Heart left ventricle (tissue), 16 donors: ENCODE measurements at regions of chr1 and their contacts with region 1.

Region 1: GRCh38 chr1:208029381-208030287 is 118.7 kb upstream of the CD34 start:
- DNase-seq: peak in 1 of 5 donors; percentile 32
- ATAC-seq: peak; percentile 39 to 74 (median 60)
- H3K4me3 ChIP-seq: peak overlapping the region in 2 of 12 donors; percentile 19 to 26
- H3K27ac ChIP-seq: peak overlapping the region; percentile 56 to 94 (median 77)
- H3K4me1 ChIP-seq: peaks cover 0 to 54% (median 21%) of the 10 kb centered on the region in 12 donors
- H3K27me3 ChIP-seq: no peaks in the 10 kb centered on the region
- CTCF ChIP-seq: no peak
- POLR2A ChIP-seq: no peak

Region 2: GRCh38 chr1:207676153-207676552 is 353.5 kb before region 1 on chr1:
- intact Hi-C with region 1: no loop called
- DNase-seq: no peak
- ATAC-seq: no peak
- H3K4me3 ChIP-seq: no peak overlapping the region
- H3K27ac ChIP-seq: no peak overlapping the region
- H3K4me1 ChIP-seq: no peaks in the 10 kb centered on the region
- H3K27me3 ChIP-seq: peaks cover 0 to 29% (median 4%) of the 10 kb centered on the region in 9 donors
- CTCF ChIP-seq: no peak
- POLR2A ChIP-seq: no peak

Region 3: GRCh38 chr1:207751790-207752455 is 277.7 kb before region 1 on chr1 and contains the start of gene CD46:
- intact Hi-C with region 1: no loop called
- DNase-seq: peak; percentile 97 to 99 (median 98)
- ATAC-seq: peak; percentile 98 to 99 (median 98)
- H3K4me3 ChIP-seq: peak within 1 kb of the TSS; percentile 48 to 94 (median 82)
- H3K27ac ChIP-seq: peak within 1 kb of the TSS; percentile 74 to 96 (median 90)
- H3K4me1 ChIP-seq: peaks cover 0 to 67% (median 48%) of the 10 kb centered on the region in 12 donors
- H3K27me3 ChIP-seq: no peaks in the 10 kb centered on the region
- CTCF ChIP-seq: no peak
- POLR2A ChIP-seq: peak; percentile 62 to 95
- total RNA-seq, gene CD46: 67.7 to 133 (median 101) TPM

Region 4: DNA sequence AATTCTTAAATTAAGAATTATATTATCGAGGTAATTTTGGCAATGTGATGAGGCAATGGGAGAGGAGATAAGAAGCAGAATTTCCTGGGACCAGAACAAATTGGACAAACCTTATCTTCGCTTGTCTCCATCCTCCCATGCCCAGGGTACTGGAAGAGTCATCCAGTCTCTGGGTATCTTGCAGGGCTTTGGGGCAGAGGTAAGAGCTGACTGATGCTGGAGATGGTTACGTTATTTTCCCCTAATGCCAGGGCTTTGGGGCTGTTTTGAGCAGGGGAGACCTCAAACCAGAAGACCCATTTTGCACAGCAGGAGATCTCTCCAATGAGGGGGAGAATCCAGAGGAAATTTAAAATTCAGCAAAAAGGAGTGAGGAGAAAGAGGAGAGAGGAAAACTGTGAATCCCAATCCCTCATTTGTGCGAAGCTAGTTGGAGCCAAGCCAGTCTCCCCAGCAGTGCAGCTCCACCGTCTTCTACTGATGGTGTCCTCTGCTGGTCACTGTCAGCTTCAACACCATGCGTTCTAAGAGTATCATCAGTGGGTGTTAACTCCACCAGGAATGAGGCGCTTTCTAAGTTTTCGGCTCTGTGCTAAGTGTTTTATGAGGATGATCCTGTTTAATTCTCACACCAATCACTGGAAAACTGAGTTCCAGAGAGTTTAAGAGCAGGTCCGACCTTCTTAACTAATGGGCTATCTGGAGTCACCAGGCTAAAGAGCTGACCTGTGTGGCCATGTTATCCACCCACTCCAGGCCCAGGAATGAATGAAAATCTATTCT is 32.0 kb before region 1 on chr1:
- intact Hi-C with region 1: no loop called
- DNase-seq: peak; percentile 75 to 86 (median 84)
- ATAC-seq: peak; percentile 66 to 92 (median 84)
- H3K4me3 ChIP-seq: no peak overlapping the region
- H3K27ac ChIP-seq: no peak overlapping the region
- H3K4me1 ChIP-seq: peaks cover 0 to 7% (median 0%) of the 10 kb centered on the region in 12 donors
- H3K27me3 ChIP-seq: no peaks in the 10 kb centered on the region
- CTCF ChIP-seq: peak; percentile 71 to 90 (median 80)
- POLR2A ChIP-seq: no peak

Region 5: GRCh38 chr1:208251911-208252835 is 222.5 kb after region 1 on chr1:
- intact Hi-C with region 1: loop called in 7 of 10 experiments (anchors 2 to 5 kb)
- DNase-seq: peak in 1 of 5 donors; percentile 46
- ATAC-seq: peak in 1 of 4 donors; percentile 42
- H3K4me3 ChIP-seq: peak overlapping the region in 2 of 12 donors; percentile 0 to 19
- H3K27ac ChIP-seq: no peak overlapping the region
- H3K4me1 ChIP-seq: peaks cover 0 to 23% (median 1%) of the 10 kb centered on the region in 12 donors
- H3K27me3 ChIP-seq: no peaks in the 10 kb centered on the region
- CTCF ChIP-seq: peak in 7 of 12 donors; percentile 40 to 67 (median 56)
- POLR2A ChIP-seq: no peak